Right ventricle myocardium inferior (tissue), 1 donor: ENCODE measurements at regions of chr15 and their contacts with region 1.

Region 1: DNA sequence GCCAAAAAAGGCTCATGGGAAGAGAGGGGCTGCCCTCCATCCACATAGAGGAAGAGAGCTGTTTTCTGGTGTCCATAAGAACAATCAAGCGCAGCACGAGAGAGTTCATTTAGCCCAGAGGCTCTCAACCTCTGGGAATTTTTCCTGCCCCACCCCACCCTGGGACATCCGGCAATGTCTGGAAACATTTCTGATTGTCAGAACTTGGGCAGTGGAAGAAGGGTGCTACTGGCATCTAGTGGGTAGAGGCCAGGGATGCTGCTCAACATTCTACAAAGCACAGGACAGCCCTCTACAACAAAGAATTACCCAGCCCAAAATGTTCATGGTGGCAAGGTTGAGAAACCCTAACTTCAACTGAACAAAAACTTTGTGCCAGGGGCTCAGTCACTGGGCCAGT is 92.9 kb downstream of the RAB11A start:
- DNase-seq: no peak
- ATAC-seq: no peak

Region 2: GRCh38 chr15:65655026-65655425 is 307.2 kb before region 1 on chr15:
- intact Hi-C with region 1: loop called (anchors 10 kb)
- DNase-seq: no peak
- ATAC-seq: no peak